ENCODE measurements at regions of chr6 and their contacts with region 1.

Region 1: GRCh38 chr6:154156135-154156896 is 117.3 kb downstream of the OPRM1 start:
- DNase-seq: peak; percentile 86
- H3K4me3 Mint-ChIP-seq: peak overlapping the region; percentile 60
- H3K27ac Mint-ChIP-seq: peak overlapping the region; percentile 77
- H3K4me1 Mint-ChIP-seq: peaks cover 53% of the 10 kb centered on the region
- H3K27me3 Mint-ChIP-seq: no peaks in the 10 kb centered on the region

Region 2: GRCh38 chr6:154197196-154197860 is 41.0 kb after region 1 on chr6:
- CTCF ChIA-PET with region 1: interaction called, 3 read pairs
- intact Hi-C with region 1: loop called (anchors 1 kb)
- DNase-seq: no peak
- H3K4me3 Mint-ChIP-seq: peak overlapping the region; percentile 28
- H3K27ac Mint-ChIP-seq: no peak overlapping the region
- H3K4me1 Mint-ChIP-seq: peaks cover 60% of the 10 kb centered on the region
- H3K27me3 Mint-ChIP-seq: no peaks in the 10 kb centered on the region

Region 3: DNA sequence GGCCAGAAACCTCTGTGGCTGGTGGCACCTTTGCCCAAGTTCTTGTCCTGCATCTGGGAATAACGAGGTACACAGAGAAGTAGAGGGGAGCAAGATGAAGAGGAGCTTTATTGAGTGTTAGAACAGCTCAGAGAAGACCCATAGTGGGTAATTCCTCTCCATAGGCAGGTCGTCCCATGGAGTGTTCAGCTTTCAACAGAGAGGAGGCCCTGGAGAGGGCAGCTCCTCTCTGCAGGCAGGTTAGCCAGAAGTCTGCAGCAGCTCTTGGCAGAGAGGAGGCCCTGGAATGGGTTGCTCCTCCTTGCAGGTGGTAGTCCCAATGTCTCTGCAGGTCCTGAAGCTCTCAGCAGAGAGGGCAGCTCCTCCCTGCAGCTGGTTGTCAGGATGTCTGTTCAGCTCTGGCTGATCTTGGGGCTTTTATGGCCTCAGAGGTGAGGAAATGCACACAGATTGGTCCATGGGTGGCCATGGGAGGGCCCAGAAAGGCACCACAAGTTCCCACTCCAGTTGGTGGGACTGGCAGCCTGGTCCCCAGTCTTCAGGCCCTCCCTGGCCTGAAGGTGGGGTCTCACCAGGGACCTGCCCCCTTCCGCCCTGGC is 111.3 kb after region 1 on chr6:
- CTCF ChIA-PET with region 1: interaction called, 102 read pairs
- intact Hi-C with region 1: no loop called
- DNase-seq: peak; percentile 32
- H3K4me3 Mint-ChIP-seq: no peak overlapping the region
- H3K27ac Mint-ChIP-seq: no peak overlapping the region
- H3K4me1 Mint-ChIP-seq: peaks cover 25% of the 10 kb centered on the region
- H3K27me3 Mint-ChIP-seq: no peaks in the 10 kb centered on the region

Region 4: DNA sequence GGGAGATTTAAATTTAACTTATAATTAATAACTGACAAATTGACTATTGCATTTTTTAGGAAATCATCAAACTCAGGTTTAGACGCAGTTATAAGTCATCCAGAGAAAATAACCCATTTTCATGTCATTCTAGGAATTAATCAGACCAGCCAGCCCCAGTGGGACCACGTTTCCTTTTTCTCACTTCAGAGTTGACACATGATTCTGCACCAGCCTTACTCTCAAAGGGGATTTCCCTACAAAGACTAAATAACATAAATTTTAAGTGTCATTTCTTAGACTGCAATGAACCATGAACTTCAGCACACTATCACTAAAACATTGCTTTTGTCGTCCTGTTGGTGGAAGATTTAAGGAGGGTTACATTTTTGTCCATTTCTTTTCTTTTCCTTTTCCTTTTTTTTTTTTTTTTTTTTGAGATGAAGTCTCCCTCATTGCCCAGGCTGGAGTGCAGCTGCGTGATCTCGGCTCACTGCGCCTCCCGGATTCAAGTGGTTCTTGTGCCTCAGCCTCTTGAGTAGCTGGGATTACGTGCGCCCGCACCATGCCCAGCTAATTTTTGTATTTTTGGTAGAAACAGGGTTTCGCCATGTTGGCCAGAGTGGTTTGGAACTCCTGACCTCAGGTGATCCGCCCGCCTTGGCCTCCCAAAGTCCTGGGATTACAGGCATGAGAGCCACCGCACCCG is 196.7 kb after region 1 on chr6:
- CTCF ChIA-PET with region 1: interaction called, 10 read pairs
- intact Hi-C with region 1: loop called (anchors 1 kb)
- DNase-seq: peak; percentile 83
- H3K4me3 Mint-ChIP-seq: no peak overlapping the region
- H3K27ac Mint-ChIP-seq: no peak overlapping the region
- H3K4me1 Mint-ChIP-seq: peaks cover 38% of the 10 kb centered on the region
- H3K27me3 Mint-ChIP-seq: peaks cover 25% of the 10 kb centered on the region

Region 5: GRCh38 chr6:154510143-154510905 is 354.0 kb after region 1 on chr6 and contains the start of gene CNKSR3:
- CTCF ChIA-PET with region 1: no interaction called
- intact Hi-C with region 1: loop called (anchors 5 kb)
- DNase-seq: peak; percentile 50
- H3K4me3 Mint-ChIP-seq: peak within 1 kb of the TSS; percentile 63
- H3K27ac Mint-ChIP-seq: no peak within 1 kb of the TSS
- H3K4me1 Mint-ChIP-seq: peaks cover 9% of the 10 kb centered on the region
- H3K27me3 Mint-ChIP-seq: peaks cover 50% of the 10 kb centered on the region
- total RNA-seq, gene CNKSR3: 0.12 TPM

Region 6: GRCh38 chr6:154548130-154548830 is 392.0 kb after region 1 on chr6:
- CTCF ChIA-PET with region 1: no interaction called
- intact Hi-C with region 1: no loop called
- DNase-seq: no peak
- H3K4me3 Mint-ChIP-seq: no peak overlapping the region
- H3K27ac Mint-ChIP-seq: no peak overlapping the region
- H3K4me1 Mint-ChIP-seq: no peaks in the 10 kb centered on the region
- H3K27me3 Mint-ChIP-seq: peaks cover 3% of the 10 kb centered on the region

Region 7: DNA sequence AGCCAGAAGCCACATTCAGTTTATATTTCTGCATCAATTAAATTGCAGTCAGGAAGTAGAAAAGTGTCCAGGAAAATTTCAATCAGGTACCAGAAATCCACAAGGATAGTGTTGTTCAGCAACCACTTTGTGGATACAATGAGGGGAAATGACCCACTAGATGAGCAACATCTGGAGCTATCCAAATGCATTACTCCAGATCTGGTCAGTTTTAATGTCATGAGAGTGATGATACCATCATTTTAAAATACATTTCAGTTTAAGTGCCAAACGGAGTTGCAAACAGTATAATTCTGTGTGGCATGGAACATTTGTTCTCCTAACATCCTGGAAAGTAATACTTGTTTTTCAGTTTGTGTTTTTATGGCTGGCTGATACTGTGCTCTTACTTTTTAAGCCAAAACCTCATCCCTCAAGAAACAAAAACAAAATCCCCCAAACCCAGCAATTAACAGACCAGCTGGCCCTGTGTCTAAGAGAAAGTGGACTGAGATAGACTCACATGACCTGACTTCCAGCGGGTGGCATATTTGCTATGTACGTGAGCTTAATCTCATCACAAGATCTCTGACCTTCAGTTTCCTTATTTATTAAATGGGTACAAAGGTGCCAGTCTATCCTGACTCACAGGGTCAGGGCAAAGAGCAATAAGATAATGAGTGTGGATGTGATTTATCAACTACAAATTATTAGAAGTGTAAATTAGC is 413.0 kb after region 1 on chr6:
- CTCF ChIA-PET with region 1: no interaction called
- intact Hi-C with region 1: no loop called
- DNase-seq: no peak
- H3K4me3 Mint-ChIP-seq: no peak overlapping the region
- H3K27ac Mint-ChIP-seq: no peak overlapping the region
- H3K4me1 Mint-ChIP-seq: no peaks in the 10 kb centered on the region
- H3K27me3 Mint-ChIP-seq: no peaks in the 10 kb centered on the region

Region 8: GRCh38 chr6:154733012-154733625 is 576.8 kb after region 1 on chr6 and contains the start of gene SCAF8:
- CTCF ChIA-PET with region 1: no interaction called
- intact Hi-C with region 1: loop called (anchors 5 kb)
- DNase-seq: peak; percentile 83
- H3K4me3 Mint-ChIP-seq: peak within 1 kb of the TSS; percentile 85
- H3K27ac Mint-ChIP-seq: peak within 1 kb of the TSS; percentile 93
- H3K4me1 Mint-ChIP-seq: peaks cover 44% of the 10 kb centered on the region
- H3K27me3 Mint-ChIP-seq: no peaks in the 10 kb centered on the region
- total RNA-seq, gene SCAF8: 27.2 to 28.0 TPM